Activated CD4-positive, alpha-beta T cell treated with anti-CD3 and anti-CD28 coated beads for 36 hours (primary cell): ENCODE measurements at regions of chr11 and their contacts with region 1.

Region 1: GRCh38 chr11:43643898-43644620 is 36.5 kb upstream of the HSD17B12 start:
- DNase-seq: peak; percentile 94
- ATAC-seq: peak; percentile 99
- H3K4me3 Mint-ChIP-seq: peak overlapping the region; percentile 78
- H3K27ac Mint-ChIP-seq: peak overlapping the region; percentile 89
- H3K4me1 Mint-ChIP-seq: peaks cover 19% of the 10 kb centered on the region
- H3K27me3 Mint-ChIP-seq: peaks cover 15% of the 10 kb centered on the region

Region 2: GRCh38 chr11:43579171-43579918 is 64.7 kb before region 1 on chr11:
- CTCF ChIA-PET with region 1: interaction called, 3 read pairs
- POLR2A ChIA-PET with region 1: no interaction called
- intact Hi-C with region 1: loop called (anchors 1 to 5 kb)
- DNase-seq: peak; percentile 76
- ATAC-seq: peak; percentile 65
- H3K4me3 Mint-ChIP-seq: peak overlapping the region; percentile 47
- H3K27ac Mint-ChIP-seq: no peak overlapping the region
- H3K4me1 Mint-ChIP-seq: peaks cover 43% of the 10 kb centered on the region
- H3K27me3 Mint-ChIP-seq: peaks cover 84% of the 10 kb centered on the region

Region 3: DNA sequence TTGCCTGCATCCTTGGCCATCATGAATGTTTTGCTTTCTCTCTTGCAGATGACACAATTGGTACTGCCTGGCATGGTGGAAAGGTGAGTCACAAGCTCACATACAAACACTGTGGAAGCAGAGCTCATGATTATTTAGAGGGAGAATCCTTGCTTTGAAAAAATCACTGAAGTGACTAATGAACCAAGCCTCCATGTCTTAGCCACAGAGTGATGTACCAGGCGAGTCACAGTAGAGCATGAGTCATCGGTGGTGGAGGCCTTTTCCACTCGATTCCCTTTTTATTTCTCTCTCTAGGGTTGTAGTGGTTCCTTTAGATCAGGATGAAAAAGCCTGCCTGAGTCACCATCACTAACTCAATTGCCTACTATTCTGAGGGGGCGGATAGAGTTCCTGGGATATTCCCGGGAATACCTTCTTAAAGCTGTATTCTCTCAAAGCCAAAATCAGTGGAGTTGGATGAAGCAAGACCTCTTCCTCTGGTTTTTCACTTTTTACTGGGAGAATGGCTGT is 186.9 kb after region 1 on chr11:
- CTCF ChIA-PET with region 1: no interaction called
- POLR2A ChIA-PET with region 1: no interaction called
- intact Hi-C with region 1: loop called in 1 of 2 experiments (anchors 2 kb)
- DNase-seq: peak; percentile 81
- ATAC-seq: peak; percentile 99
- H3K4me3 Mint-ChIP-seq: no peak overlapping the region
- H3K27ac Mint-ChIP-seq: peak overlapping the region; percentile 73
- H3K4me1 Mint-ChIP-seq: peaks cover 24% of the 10 kb centered on the region
- H3K27me3 Mint-ChIP-seq: no peaks in the 10 kb centered on the region

Region 4: GRCh38 chr11:43868852-43869567 is 225.0 kb after region 1 on chr11:
- CTCF ChIA-PET with region 1: no interaction called
- POLR2A ChIA-PET with region 1: no interaction called
- intact Hi-C with region 1: loop called (anchors 1 to 2 kb)
- DNase-seq: peak; percentile 58
- ATAC-seq: peak; percentile 97
- H3K4me3 Mint-ChIP-seq: peak overlapping the region; percentile 7
- H3K27ac Mint-ChIP-seq: peak overlapping the region; percentile 8
- H3K4me1 Mint-ChIP-seq: peaks cover 21% of the 10 kb centered on the region
- H3K27me3 Mint-ChIP-seq: peaks cover 45% of the 10 kb centered on the region

Region 5: DNA sequence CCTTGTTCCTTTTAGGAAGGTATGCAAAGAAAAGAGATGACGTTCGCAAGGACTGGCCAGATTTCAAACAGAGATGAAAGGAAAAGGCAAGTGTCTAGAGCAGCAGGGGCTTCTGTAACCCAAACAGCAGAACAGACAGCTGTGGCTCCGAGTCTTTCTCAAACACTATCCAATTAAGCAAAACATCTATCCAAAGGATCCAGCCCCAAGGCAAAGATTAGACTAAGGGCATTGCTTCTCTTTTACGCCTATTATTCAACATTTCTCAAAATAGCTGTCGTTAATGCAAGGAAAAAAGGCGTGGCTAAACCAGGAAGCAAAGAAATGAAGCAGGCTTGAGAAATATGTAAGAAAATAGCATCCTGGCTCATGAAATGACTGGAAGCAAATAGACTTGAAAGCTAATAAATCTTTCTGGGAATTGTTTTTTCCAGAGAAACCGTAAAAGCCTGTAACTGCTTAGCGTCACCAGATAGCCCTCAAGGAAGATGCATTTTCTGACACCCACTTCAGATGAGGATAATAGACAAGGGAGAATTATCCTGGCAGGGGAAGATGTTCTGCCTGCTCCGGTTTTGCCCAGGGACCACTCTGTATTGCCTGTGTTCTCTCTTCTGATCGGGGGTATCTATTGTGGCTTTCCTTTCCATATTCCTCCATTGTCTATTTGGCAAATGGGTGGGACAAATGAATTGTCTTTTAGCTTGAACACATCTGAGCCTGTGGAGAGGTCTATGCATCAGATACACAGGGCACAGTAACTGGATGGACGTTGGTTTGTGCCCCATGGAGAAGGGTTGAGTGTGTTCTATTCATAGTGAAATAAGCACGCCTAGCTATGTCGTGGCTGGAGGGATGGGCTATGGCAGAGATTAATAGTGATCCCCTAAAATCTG is 318.6 kb after region 1 on chr11:
- CTCF ChIA-PET with region 1: no interaction called
- POLR2A ChIA-PET with region 1: no interaction called
- intact Hi-C with region 1: no loop called
- DNase-seq: no peak
- ATAC-seq: no peak
- H3K4me3 Mint-ChIP-seq: no peak overlapping the region
- H3K27ac Mint-ChIP-seq: no peak overlapping the region
- H3K4me1 Mint-ChIP-seq: no peaks in the 10 kb centered on the region
- H3K27me3 Mint-ChIP-seq: peaks cover 24% of the 10 kb centered on the region

Region 6: DNA sequence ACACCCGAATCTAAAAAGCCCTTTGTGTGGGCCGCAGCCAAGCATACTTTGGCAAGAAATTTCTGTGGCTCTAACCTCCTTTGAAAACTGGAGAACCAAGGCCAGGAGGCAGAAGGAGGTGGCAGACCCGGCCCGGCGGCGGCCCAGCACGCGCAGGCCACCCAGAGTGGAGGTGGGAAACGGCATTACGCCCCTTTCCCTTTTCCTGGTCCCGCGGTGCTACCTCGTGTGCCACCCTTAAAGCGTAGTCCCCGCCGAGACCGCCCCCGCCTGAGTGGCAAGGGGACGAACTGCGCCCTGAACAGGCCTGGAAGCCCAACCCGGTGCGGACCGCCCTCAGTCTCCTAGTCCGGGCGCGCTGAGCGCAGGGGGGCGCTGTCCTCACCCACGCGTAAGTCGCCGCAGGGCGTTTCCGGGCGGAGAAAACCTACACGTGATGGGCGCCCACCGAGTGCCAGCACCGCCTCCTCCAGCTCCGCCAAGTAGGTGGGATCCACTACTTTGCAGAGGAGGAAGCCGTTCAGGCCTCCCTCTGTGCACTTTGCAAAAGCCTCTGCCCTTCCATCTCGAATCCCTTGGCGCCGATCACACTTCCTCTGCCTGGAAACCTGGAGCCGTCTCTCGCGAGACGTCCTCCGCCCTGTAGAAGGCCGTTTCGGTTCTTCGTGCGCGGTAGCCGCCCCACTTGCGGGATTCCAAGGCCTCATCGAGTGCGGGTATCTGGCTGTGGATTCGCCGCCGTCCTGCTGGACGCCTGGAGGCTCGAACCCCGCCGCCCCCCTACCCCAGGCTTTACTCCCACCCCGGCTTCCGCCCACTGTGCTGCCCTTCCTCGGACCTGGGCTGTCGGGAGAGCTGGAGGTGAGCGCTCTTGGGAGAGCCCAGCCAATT is 422.0 kb after region 1 on chr11 and contains the start of gene ACCS:
- CTCF ChIA-PET with region 1: no interaction called
- POLR2A ChIA-PET with region 1: no interaction called
- intact Hi-C with region 1: loop called in 1 of 2 experiments (anchors 5 kb)
- DNase-seq: peak; percentile 91
- ATAC-seq: peak; percentile 95
- H3K4me3 Mint-ChIP-seq: peak within 1 kb of the TSS; percentile 79
- H3K27ac Mint-ChIP-seq: peak within 1 kb of the TSS; percentile 90
- H3K4me1 Mint-ChIP-seq: peaks cover 22% of the 10 kb centered on the region
- H3K27me3 Mint-ChIP-seq: no peaks in the 10 kb centered on the region
- total RNA-seq, gene ACCS: 6.6 to 7.2 TPM